Endothelial cell of umbilical vein (primary cell): ENCODE measurements at regions of chr2 and their contacts with region 1.

Region 1: DNA sequence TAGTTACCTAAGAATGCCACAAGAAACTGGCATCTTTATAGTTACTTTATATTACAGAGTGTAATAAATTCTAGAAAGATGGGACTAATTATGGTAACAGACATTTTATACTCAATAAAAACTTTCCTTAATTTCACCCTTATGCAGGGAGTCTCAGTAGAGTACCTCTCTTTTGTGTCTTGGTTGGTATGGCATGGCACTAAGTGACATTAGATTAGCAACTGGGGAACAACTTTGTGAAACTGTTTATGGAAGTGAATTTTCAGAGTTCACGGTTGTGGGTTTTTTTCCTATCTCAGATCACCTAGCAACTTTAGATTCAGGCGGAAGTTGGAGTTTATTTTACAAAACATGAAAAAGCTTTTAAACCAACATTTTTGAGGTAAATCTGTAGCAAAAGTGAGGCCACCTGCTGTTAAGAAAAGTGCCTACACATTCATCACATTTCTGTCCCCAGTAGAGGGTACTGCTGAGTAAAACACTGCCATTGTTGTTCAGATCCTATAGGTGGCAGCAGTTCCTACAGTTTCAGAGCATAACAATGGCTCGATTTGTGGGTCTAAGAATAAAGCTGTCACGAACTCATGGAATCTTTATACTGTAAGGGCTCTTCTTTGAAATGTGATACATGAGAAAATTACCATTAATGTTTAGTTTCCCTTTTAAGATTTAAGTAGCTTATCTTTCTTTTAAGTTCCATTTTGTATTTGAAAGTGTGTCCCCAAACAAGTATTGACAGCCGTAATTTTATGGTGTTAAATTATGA is 117.6 kb downstream of the CAMKMT start:
- DNase-seq: peak; percentile 89
- H3K4me3 ChIP-seq: no peak overlapping the region
- H3K27ac ChIP-seq: no peak overlapping the region
- H3K4me1 ChIP-seq: no peaks in the 10 kb centered on the region
- H3K27me3 ChIP-seq: no peaks in the 10 kb centered on the region
- CTCF ChIP-seq: peak; percentile 97 to 99
- POLR2A ChIP-seq: no peak

Region 2: DNA sequence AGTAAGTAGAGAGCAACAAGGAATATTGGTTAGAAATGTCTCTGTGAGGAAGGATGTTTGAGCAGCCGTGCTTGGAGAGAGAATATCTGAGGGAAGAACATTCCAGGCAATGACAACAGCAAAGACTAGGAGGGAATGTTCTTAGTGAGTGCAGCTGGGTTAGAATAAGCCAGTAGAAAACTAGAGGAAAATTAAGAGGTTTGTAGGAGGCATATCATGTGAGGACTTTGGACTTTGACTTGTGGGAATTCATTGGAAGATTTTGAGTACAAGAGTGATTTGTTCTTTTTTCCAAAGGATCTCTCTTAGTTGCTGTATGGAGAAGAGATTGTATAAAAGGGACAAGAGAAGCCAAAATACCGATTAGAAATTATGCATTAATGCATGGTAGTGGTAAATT is 263.5 kb before region 1 on chr2:
- CTCF ChIA-PET with region 1: no interaction called
- POLR2A ChIA-PET with region 1: no interaction called
- dilution Hi-C with region 1: no loop called
- intact Hi-C with region 1: no loop called
- DNase-seq: no peak
- H3K4me3 ChIP-seq: no peak overlapping the region
- H3K27ac ChIP-seq: no peak overlapping the region
- H3K4me1 ChIP-seq: peaks cover 2% of the 10 kb centered on the region
- H3K27me3 ChIP-seq: no peaks in the 10 kb centered on the region
- CTCF ChIP-seq: no peak
- POLR2A ChIP-seq: no peak

Region 3: GRCh38 chr2:44392338-44392943 is 86.9 kb before region 1 on chr2:
- CTCF ChIA-PET with region 1: interaction called, 172 read pairs
- POLR2A ChIA-PET with region 1: no interaction called
- dilution Hi-C with region 1: no loop called
- intact Hi-C with region 1: loop called (anchors 1 kb)
- DNase-seq: peak; percentile 46
- H3K4me3 ChIP-seq: no peak overlapping the region
- H3K27ac ChIP-seq: no peak overlapping the region
- H3K4me1 ChIP-seq: no peaks in the 10 kb centered on the region
- H3K27me3 ChIP-seq: no peaks in the 10 kb centered on the region
- CTCF ChIP-seq: peak; percentile 36 to 38
- POLR2A ChIP-seq: no peak

Region 4: GRCh38 chr2:44490726-44491125 is 11.4 kb after region 1 on chr2:
- CTCF ChIA-PET with region 1: interaction called, 47 read pairs
- POLR2A ChIA-PET with region 1: no interaction called
- dilution Hi-C with region 1: no loop called
- intact Hi-C with region 1: no loop called
- DNase-seq: no peak
- H3K4me3 ChIP-seq: no peak overlapping the region
- H3K27ac ChIP-seq: no peak overlapping the region
- H3K4me1 ChIP-seq: no peaks in the 10 kb centered on the region
- H3K27me3 ChIP-seq: no peaks in the 10 kb centered on the region
- CTCF ChIP-seq: no peak
- POLR2A ChIP-seq: no peak

Region 5: GRCh38 chr2:44566059-44566458 is 86.8 kb after region 1 on chr2:
- CTCF ChIA-PET with region 1: interaction called, 28 read pairs
- POLR2A ChIA-PET with region 1: no interaction called
- dilution Hi-C with region 1: no loop called
- intact Hi-C with region 1: no loop called
- DNase-seq: no peak
- H3K4me3 ChIP-seq: no peak overlapping the region
- H3K27ac ChIP-seq: no peak overlapping the region
- H3K4me1 ChIP-seq: peaks cover under 1% of the 10 kb centered on the region
- H3K27me3 ChIP-seq: no peaks in the 10 kb centered on the region
- CTCF ChIP-seq: no peak
- POLR2A ChIP-seq: no peak

Region 6: GRCh38 chr2:44674473-44675284 is 195.4 kb after region 1 on chr2:
- CTCF ChIA-PET with region 1: interaction called, 21 read pairs
- POLR2A ChIA-PET with region 1: no interaction called
- dilution Hi-C with region 1: no loop called
- intact Hi-C with region 1: no loop called
- DNase-seq: no peak
- H3K4me3 ChIP-seq: no peak overlapping the region
- H3K27ac ChIP-seq: no peak overlapping the region
- H3K4me1 ChIP-seq: no peaks in the 10 kb centered on the region
- H3K27me3 ChIP-seq: no peaks in the 10 kb centered on the region
- CTCF ChIP-seq: no peak
- POLR2A ChIP-seq: no peak

Region 7: GRCh38 chr2:44744961-44745892 is 265.9 kb after region 1 on chr2:
- CTCF ChIA-PET with region 1: interaction called, 12 read pairs
- POLR2A ChIA-PET with region 1: no interaction called
- dilution Hi-C with region 1: no loop called
- intact Hi-C with region 1: no loop called
- DNase-seq: no peak
- H3K4me3 ChIP-seq: no peak overlapping the region
- H3K27ac ChIP-seq: no peak overlapping the region
- H3K4me1 ChIP-seq: no peaks in the 10 kb centered on the region
- H3K27me3 ChIP-seq: no peaks in the 10 kb centered on the region
- CTCF ChIP-seq: no peak
- POLR2A ChIP-seq: no peak

Region 8: GRCh38 chr2:44928483-44929158 is 449.3 kb after region 1 on chr2:
- CTCF ChIA-PET with region 1: interaction called, 21 read pairs
- POLR2A ChIA-PET with region 1: no interaction called
- dilution Hi-C with region 1: no loop called
- intact Hi-C with region 1: no loop called
- DNase-seq: no peak
- H3K4me3 ChIP-seq: no peak overlapping the region
- H3K27ac ChIP-seq: no peak overlapping the region
- H3K4me1 ChIP-seq: peaks cover 4% of the 10 kb centered on the region
- H3K27me3 ChIP-seq: peaks cover 88 to 98% of the 10 kb centered on the region in 2 experiments
- CTCF ChIP-seq: no peak
- POLR2A ChIP-seq: no peak